ENCODE measurements at regions of chr17 and their contacts with region 1.

Region 1: DNA sequence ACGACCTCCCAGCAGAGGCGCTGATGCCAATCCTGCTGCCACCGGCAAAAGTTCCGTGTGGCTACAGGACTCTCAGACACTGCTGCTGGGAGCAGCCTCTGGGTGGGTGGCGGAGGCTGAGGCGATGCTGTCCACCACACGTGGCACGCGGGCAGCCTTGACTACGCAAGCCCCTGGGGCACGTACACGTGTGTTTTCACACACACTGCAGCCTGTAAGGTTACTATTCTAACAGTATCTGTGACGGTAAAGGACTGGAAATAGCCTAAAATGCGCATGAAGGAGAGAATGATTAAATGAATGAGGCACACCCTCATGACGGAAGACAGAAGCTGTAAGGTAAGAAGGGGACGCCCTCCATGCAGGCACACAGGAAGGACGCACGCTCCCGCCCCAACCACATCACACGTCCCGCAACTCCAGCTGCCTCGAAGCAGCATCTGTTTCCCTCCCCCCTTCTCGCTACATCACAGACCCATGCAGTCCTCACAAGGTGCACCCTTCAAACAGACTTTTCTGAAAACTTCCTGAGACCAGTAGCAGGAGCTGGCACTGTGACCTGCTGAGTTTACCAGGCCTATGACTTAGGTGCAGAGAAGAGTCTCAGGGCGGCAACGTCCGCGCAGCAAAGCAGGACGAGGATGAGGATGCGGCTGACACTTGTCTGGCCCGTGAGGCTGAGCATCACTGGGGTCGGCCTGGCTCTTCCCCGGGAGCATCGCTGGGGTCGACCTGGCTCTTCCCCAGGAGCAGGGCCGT is 28.7 kb upstream of the FASN start:
- DNase-seq: peak; percentile 96 to 98 (median 97)
- H3K4me3 ChIP-seq: peak overlapping the region in 1 of 2 donors; percentile 45
- H3K4me3 Mint-ChIP-seq: peak overlapping the region; percentile 74 to 87 (median 82)
- H3K27ac ChIP-seq: peak overlapping the region; percentile 77
- H3K27ac Mint-ChIP-seq: peak overlapping the region; percentile 91 to 100 (median 99)
- H3K4me1 ChIP-seq: peaks cover 66% of the 10 kb centered on the region
- H3K4me1 Mint-ChIP-seq: peaks cover 27 to 70% (median 51%) of the 10 kb centered on the region in 4 donors
- H3K27me3 ChIP-seq: no peaks in the 10 kb centered on the region
- H3K27me3 Mint-ChIP-seq: no peaks in the 10 kb centered on the region

Region 2: DNA sequence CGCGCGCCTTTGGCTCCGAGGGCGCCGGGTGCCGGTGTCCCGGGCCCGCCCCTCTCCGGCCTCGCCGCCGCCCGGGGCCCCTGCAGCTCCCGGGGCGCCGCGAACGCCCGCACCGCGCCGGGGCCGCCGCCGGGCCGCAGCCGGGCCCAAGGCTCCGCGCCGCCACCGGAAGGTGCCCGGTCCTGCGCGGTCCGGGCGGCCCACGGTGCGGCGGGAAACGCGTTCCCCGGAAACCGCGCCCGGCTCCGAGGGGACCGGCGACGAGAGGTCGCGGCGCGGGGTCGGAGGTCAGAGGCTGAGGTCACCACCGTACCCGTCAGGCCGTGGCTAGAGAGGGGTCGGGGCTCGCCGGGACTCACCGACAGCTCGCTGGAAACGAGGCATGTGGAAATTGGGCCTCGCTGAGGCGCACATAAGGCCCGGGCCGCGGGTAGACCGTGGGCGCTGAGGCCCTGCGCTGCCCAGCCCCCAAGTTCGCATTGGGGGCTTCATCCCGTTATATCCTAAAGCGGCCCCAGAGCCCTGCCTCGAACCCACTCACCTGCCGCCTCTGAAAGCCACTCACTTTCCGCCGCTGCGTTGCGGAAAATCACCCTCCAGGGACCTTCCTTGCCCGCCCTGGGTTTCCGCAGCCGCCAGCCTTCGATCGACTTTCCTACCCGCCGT is 61.0 kb before region 1 on chr17 and contains the start of gene DUS1L:
- CTCF ChIA-PET with region 1: interaction called, 3 read pairs
- POLR2A ChIA-PET with region 1: interaction called, 19 read pairs
- intact Hi-C with region 1: no loop called
- DNase-seq: peak; percentile 44 to 78 (median 70)
- H3K4me3 ChIP-seq: peak within 1 kb of the TSS; percentile 42 to 73
- H3K4me3 Mint-ChIP-seq: peak within 1 kb of the TSS; percentile 81 to 89 (median 86)
- H3K27ac ChIP-seq: peak within 1 kb of the TSS; percentile 66
- H3K27ac Mint-ChIP-seq: peak within 1 kb of the TSS; percentile 91 to 97 (median 94)
- H3K4me1 ChIP-seq: peaks cover 28% of the 10 kb centered on the region
- H3K4me1 Mint-ChIP-seq: peaks cover 0 to 23% (median 12%) of the 10 kb centered on the region in 4 donors
- H3K27me3 ChIP-seq: no peaks in the 10 kb centered on the region
- H3K27me3 Mint-ChIP-seq: no peaks in the 10 kb centered on the region
- total RNA-seq, gene DUS1L: 139 to 141 TPM

Region 3: GRCh38 chr17:82105882-82106687 is 20.6 kb before region 1 on chr17:
- CTCF ChIA-PET with region 1: interaction called, 9 read pairs
- POLR2A ChIA-PET with region 1: interaction called, 65 read pairs
- intact Hi-C with region 1: loop called (anchors 1 kb)
- DNase-seq: peak; percentile 52 to 67 (median 54)
- H3K4me3 ChIP-seq: peak overlapping the region; percentile 63 to 84
- H3K4me3 Mint-ChIP-seq: peak overlapping the region; percentile 86 to 94 (median 89)
- H3K27ac ChIP-seq: peak overlapping the region; percentile 65
- H3K27ac Mint-ChIP-seq: peak overlapping the region; percentile 94 to 98 (median 97)
- H3K4me1 ChIP-seq: peaks cover 35% of the 10 kb centered on the region
- H3K4me1 Mint-ChIP-seq: peaks cover 9 to 51% (median 23%) of the 10 kb centered on the region in 4 donors
- H3K27me3 ChIP-seq: no peaks in the 10 kb centered on the region
- H3K27me3 Mint-ChIP-seq: no peaks in the 10 kb centered on the region

Region 4: DNA sequence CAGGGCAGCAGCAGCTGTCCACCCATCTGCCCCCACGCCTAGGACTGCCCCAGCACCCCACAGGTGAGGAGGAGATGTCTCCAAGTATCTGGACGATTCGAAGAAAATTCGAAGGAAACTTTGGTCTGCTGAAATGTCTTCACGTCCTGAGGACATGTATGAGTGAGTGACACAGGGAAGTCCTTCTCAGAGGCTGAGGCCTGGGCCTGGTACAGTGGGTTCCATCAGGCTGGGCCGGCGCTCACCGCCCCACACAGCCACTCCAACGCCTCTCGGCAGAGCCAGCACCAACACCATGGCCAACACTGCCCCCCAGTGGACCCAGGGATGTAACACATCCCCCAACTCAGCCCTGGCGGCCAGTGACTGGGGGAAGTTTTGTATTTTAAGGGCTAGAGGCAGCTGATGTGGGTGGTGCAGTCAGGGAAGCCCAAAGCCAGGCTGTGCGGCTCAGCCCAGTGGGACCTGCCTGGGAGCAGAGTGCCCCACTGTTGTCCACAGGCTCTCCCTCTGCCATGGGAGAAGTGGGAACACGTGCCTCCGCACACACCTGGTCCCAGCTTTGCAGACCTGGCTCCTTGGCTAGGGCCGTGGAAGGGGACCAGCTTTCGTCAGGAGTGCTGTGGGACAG is 27.1 kb after region 1 on chr17:
- CTCF ChIA-PET with region 1: interaction called, 5 read pairs
- POLR2A ChIA-PET with region 1: interaction called, 3 read pairs
- intact Hi-C with region 1: loop called (anchors 1 kb)
- DNase-seq: peak; percentile 76 to 86 (median 81)
- H3K4me3 ChIP-seq: no peak overlapping the region
- H3K4me3 Mint-ChIP-seq: no peak overlapping the region
- H3K27ac ChIP-seq: no peak overlapping the region
- H3K27ac Mint-ChIP-seq: peak overlapping the region in 6 of 7 donors; percentile 74 to 93 (median 89)
- H3K4me1 ChIP-seq: peaks cover 9% of the 10 kb centered on the region
- H3K4me1 Mint-ChIP-seq: peaks cover 5 to 7% (median 6%) of the 10 kb centered on the region in 4 donors
- H3K27me3 ChIP-seq: no peaks in the 10 kb centered on the region
- H3K27me3 Mint-ChIP-seq: no peaks in the 10 kb centered on the region

Region 5: GRCh38 chr17:82338858-82339633 is 212.3 kb after region 1 on chr17:
- CTCF ChIA-PET with region 1: no interaction called
- POLR2A ChIA-PET with region 1: no interaction called
- intact Hi-C with region 1: no loop called
- DNase-seq: no peak
- H3K4me3 ChIP-seq: no peak overlapping the region
- H3K4me3 Mint-ChIP-seq: no peak overlapping the region
- H3K27ac ChIP-seq: no peak overlapping the region
- H3K27ac Mint-ChIP-seq: peak overlapping the region in 1 of 7 donors; percentile 26
- H3K4me1 ChIP-seq: peaks cover 15% of the 10 kb centered on the region
- H3K4me1 Mint-ChIP-seq: peaks cover 13 to 24% (median 17%) of the 10 kb centered on the region in 4 donors
- H3K27me3 ChIP-seq: no peaks in the 10 kb centered on the region
- H3K27me3 Mint-ChIP-seq: peaks cover 0 to 2% of the 10 kb centered on the region in 2 donors